ENCODE measurements at regions of chr12 and their contacts with region 1.

Region 1: GRCh38 chr12:66409195-66409871 is 107.0 kb downstream of the HELB start:
- DNase-seq: peak; percentile 45 to 66
- H3K4me3 ChIP-seq: no peak overlapping the region
- H3K4me3 Mint-ChIP-seq: no peak overlapping the region
- H3K27ac Mint-ChIP-seq: no peak overlapping the region
- H3K4me1 ChIP-seq: no peaks in the 10 kb centered on the region
- H3K4me1 Mint-ChIP-seq: no peaks in the 10 kb centered on the region
- H3K27me3 ChIP-seq: no peaks in the 10 kb centered on the region
- H3K27me3 Mint-ChIP-seq: peaks cover 5% of the 10 kb centered on the region
- CTCF ChIP-seq: peak; percentile 65

Region 2: DNA sequence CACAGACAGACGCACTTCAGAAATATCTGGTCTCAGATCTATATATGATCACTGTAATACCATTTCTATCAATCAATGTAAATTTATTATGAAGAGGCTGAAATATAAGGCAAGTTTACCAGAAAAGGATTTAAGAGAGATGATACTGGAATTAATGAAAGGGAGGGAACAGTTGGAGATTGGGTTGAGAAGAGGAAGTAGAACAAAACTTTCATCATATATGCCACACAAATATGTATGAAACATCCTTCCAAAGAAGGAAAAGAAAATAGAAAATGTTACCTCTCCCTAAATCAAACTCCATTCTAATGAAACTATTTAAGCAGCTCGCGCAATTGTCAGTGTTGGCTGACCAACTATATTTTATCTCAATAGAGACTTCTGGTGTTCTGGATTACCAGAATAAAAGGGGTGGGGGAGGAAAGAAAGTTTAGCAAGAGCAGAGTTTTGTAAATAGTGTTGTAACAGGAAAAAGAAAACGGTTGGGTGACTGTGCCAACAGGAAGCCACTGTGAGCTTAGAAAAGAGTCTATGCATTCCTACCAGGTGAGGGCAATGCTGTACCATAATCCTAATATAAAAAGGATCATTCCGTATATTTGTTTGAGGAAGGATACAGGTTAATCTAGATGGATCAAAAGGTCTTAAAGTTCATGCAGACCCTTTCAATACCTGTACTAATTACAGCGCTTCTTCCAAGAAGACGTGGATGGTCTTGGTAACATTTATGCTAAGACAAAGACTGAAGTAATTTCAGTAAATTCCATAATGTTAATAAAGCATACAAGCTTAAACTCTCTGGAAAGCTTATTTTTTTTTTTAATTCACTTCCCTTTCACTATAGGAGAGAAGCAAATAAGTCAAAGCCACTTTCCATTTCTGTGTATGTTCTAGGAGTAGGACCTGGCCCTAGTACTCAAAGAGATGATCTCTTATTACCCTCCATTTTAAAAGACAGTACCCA is 264.3 kb before region 1 on chr12:
- CTCF ChIA-PET with region 1: no interaction called
- POLR2A ChIA-PET with region 1: no interaction called
- intact Hi-C with region 1: loop called (anchors 2 kb)
- DNase-seq: peak in 1 of 2 experiments; percentile 60
- H3K4me3 ChIP-seq: no peak overlapping the region
- H3K4me3 Mint-ChIP-seq: no peak overlapping the region
- H3K27ac Mint-ChIP-seq: no peak overlapping the region
- H3K4me1 ChIP-seq: 0 out of 2 replicates have a peak, but pooled peaks cover 4% of the 10 kb centered on the region
- H3K4me1 Mint-ChIP-seq: no peaks in the 10 kb centered on the region
- H3K27me3 ChIP-seq: no peaks in the 10 kb centered on the region
- H3K27me3 Mint-ChIP-seq: no peaks in the 10 kb centered on the region
- CTCF ChIP-seq: peak; percentile 60 to 61

Region 3: DNA sequence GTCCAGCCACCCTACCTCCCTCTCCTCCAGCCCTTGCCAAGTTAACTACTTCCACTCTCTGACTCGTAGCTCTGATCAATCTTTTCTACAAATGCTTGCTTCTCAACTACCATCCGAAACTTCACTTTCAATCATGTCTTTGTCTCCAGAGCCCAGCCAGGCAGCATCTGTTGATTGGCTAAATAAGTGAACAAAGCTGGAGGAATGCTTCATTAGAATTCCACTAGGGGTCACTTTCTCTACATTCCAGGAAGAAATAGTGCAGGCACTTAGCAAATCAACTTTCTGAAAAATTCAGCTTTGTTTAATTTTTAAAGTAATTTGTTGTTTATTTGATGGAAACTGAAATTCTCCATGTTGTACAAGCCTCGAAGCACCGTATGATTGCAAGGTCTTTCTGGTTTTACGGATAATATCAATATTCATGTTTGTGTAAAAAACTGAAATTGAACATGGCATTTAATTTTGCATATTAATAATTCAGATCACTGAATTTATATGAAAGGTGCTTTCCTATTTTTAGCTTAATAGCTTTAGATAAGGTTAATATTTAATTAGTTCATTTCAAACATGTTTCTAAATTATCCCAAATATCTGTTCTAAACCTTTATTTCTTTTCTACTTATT is 139.5 kb before region 1 on chr12:
- CTCF ChIA-PET with region 1: interaction called, 3 read pairs
- POLR2A ChIA-PET with region 1: no interaction called
- intact Hi-C with region 1: loop called (anchors 2 kb)
- DNase-seq: no peak
- H3K4me3 ChIP-seq: no peak overlapping the region
- H3K4me3 Mint-ChIP-seq: no peak overlapping the region
- H3K27ac Mint-ChIP-seq: no peak overlapping the region
- H3K4me1 ChIP-seq: no peaks in the 10 kb centered on the region
- H3K4me1 Mint-ChIP-seq: no peaks in the 10 kb centered on the region
- H3K27me3 ChIP-seq: no peaks in the 10 kb centered on the region; the same call in 1 of the 2 replicates
- H3K27me3 Mint-ChIP-seq: peaks cover 7% of the 10 kb centered on the region
- CTCF ChIP-seq: peak; percentile 48 to 57

Region 4: GRCh38 chr12:66279123-66279712 is 130.1 kb before region 1 on chr12:
- CTCF ChIA-PET with region 1: interaction called, 7 read pairs
- POLR2A ChIA-PET with region 1: no interaction called
- intact Hi-C with region 1: loop called (anchors 2 kb)
- DNase-seq: peak in 1 of 2 experiments; percentile 30
- H3K4me3 ChIP-seq: no peak overlapping the region
- H3K4me3 Mint-ChIP-seq: no peak overlapping the region
- H3K27ac Mint-ChIP-seq: no peak overlapping the region
- H3K4me1 ChIP-seq: no peaks in the 10 kb centered on the region
- H3K4me1 Mint-ChIP-seq: no peaks in the 10 kb centered on the region
- H3K27me3 ChIP-seq: no peaks in the 10 kb centered on the region
- H3K27me3 Mint-ChIP-seq: peaks cover 21% of the 10 kb centered on the region
- CTCF ChIP-seq: peak; percentile 51 to 80

Region 5: DNA sequence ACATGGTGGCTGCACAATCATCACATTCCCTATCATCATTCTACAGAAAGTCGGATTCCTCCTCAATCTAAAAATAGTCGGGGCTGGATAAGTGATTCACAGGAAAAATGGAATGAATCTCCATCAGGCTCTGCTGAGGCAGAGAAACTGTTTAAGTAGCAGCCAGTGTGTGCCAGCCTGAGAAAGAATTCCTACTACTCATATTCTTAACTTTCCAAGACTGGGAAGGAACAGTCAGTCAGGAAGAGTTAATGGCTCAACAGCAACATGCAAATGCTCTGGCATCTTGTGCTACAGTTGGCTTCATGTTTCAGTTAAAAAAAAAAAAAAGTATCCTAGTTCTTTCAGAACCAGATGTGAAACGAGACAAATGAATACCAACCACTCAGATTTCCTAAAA is 82.5 kb after region 1 on chr12:
- CTCF ChIA-PET with region 1: no interaction called
- POLR2A ChIA-PET with region 1: no interaction called
- intact Hi-C with region 1: no loop called
- DNase-seq: no peak
- H3K4me3 ChIP-seq: no peak overlapping the region
- H3K4me3 Mint-ChIP-seq: no peak overlapping the region
- H3K27ac Mint-ChIP-seq: no peak overlapping the region
- H3K4me1 ChIP-seq: no peaks in the 10 kb centered on the region
- H3K4me1 Mint-ChIP-seq: no peaks in the 10 kb centered on the region
- H3K27me3 ChIP-seq: no peaks in the 10 kb centered on the region
- H3K27me3 Mint-ChIP-seq: peaks cover 30% of the 10 kb centered on the region
- CTCF ChIP-seq: no peak

Measured in Caco-2 (cell line).